ENCODE measurements at regions of chr1 and their contacts with region 1.

Region 1: GRCh38 chr1:66739401-66740157 is 12.7 kb upstream of the DYNLT5 start:
- DNase-seq: no peak
- ATAC-seq: no peak
- H3K4me3 ChIP-seq: no peak overlapping the region
- H3K4me3 Mint-ChIP-seq: no peak overlapping the region
- H3K27ac ChIP-seq: no peak overlapping the region
- H3K27ac Mint-ChIP-seq: no peak overlapping the region
- H3K4me1 ChIP-seq: no peaks in the 10 kb centered on the region
- H3K4me1 Mint-ChIP-seq: peaks cover 5% of the 10 kb centered on the region
- H3K27me3 ChIP-seq: no peaks in the 10 kb centered on the region
- H3K27me3 Mint-ChIP-seq: no peaks in the 10 kb centered on the region
- CTCF ChIP-seq: no peak

Region 2: DNA sequence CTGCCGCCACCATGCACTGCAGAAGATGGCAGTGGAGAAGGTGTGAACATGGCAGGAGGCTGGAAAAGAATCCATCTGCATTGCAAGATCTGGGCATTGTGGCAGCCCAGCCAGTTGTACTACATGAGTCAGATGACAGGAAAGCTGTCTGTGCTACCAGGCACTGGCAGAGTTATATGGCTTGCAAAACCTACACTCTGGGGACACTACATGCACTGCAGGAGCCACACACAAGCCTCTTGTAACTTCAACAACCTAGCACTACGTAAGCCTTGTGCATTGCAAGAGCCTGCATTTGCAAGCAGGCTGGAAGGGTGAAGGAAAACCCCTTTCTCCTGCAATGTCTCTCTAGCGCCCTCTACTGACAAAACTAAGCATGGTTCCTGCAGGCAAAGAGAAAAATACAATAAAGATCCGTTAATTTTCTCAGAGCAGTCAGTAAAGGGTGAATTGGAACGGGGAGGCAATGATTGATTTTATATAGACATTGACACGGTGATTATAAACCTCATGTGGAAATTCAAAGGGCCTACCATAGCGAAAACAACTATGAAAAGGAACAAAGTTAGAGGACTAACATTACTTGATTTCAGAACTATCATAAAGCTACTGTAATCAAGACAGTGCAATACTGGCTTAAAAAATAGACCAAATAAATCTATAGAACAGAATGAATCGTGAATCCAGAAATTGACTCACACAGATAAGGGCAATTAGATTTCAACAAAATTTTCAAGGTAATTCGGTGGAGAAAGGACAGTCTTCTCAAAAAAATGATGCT is 13.5 kb before region 1 on chr1:
- CTCF ChIA-PET with region 1: interaction called, 19 read pairs
- POLR2A ChIA-PET with region 1: no interaction called
- intact Hi-C with region 1: no loop called
- DNase-seq: peak; percentile 4 to 78 (median 42)
- ATAC-seq: peak; percentile 66
- H3K4me3 ChIP-seq: no peak overlapping the region
- H3K4me3 Mint-ChIP-seq: no peak overlapping the region
- H3K27ac ChIP-seq: no peak overlapping the region
- H3K27ac Mint-ChIP-seq: no peak overlapping the region
- H3K4me1 ChIP-seq: no peaks in the 10 kb centered on the region
- H3K4me1 Mint-ChIP-seq: peaks cover 17% of the 10 kb centered on the region
- H3K27me3 ChIP-seq: no peaks in the 10 kb centered on the region
- H3K27me3 Mint-ChIP-seq: peaks cover 20% of the 10 kb centered on the region
- CTCF ChIP-seq: peak; percentile 94